A549 (cell line): ENCODE measurements at regions of chr12 and their contacts with region 1.

Region 1: DNA sequence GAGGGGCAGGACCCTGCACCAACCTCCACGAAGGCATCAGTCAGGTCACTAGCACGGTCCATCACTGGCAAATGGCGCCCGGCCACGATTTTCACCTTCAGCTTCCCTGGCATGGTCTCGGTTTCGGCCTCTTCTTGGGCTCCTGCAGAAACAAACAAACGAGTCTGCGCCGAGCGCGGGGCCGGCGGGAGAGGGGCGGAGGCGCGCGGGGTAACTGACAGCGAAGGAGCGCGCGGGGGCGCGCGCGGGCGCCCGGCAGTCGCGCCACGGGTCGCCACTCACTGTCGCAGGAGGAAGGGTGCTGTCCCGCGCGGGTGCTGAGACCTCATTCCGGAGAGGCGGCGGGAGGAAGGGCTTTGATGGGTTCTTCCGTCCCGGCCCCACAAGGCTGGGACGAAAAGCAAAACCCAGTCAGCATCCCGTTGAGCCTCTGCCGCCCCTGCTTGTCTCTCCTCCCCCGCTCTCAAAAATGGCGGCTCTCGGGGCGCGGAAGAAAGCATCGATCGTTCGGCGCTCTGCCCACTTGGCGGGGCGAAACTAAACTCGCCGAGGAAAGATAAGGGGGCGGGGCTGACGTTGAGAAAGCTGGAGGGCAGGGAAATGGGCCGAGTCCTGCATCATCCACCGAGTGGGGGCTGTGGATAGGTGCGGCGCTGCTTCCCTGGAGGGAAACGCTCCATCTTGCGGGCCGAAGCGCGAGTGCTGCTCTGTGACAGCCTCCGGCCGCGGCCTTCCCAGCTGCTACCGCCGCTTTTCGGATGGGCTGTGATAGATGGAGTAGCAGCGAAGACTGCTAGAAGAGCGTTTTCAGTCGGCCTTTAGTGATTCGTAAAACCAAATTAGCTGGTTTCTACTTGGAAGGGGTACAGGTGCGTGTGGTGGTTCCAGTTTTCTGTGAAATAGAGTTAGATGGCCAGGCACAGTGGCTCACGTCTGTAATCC is at the start of gene C2CD5:
- DNase-seq: peak; percentile 84 to 99
- ATAC-seq: peak; percentile 96 to 97
- H3K4me3 ChIP-seq: peak within 1 kb of the TSS; percentile 83
- H3K27ac ChIP-seq: peak within 1 kb of the TSS; percentile 94 to 95
- H3K4me1 ChIP-seq: peaks cover 18% of the 10 kb centered on the region
- CTCF ChIP-seq: peak; percentile 38
- EP300 ChIP-seq: no peak
- POLR2A ChIP-seq: peak; percentile 82
- RAD21 ChIP-seq: peak; percentile 39
- polyA plus RNA-seq, gene C2CD5: 35.2 and 39.7 TPM in 2 replicates

Region 2: GRCh38 chr12:22532317-22532716 is 12.0 kb before region 1 on chr12:
- CTCF ChIA-PET with region 1: interaction called, 10 read pairs
- POLR2A ChIA-PET with region 1: interaction called, 5 read pairs
- DNase-seq: no peak
- ATAC-seq: no peak
- H3K4me3 ChIP-seq: no peak overlapping the region
- H3K27ac ChIP-seq: no peak overlapping the region
- H3K4me1 ChIP-seq: peaks cover 12% of the 10 kb centered on the region; the same call in 2 of the 3 replicates
- CTCF ChIP-seq: no peak
- EP300 ChIP-seq: no peak
- POLR2A ChIP-seq: no peak
- RAD21 ChIP-seq: no peak

Region 3: GRCh38 chr12:22624870-22625761 is 80.8 kb after region 1 on chr12 and contains the start of gene ETNK1:
- CTCF ChIA-PET with region 1: interaction called, 8 read pairs
- POLR2A ChIA-PET with region 1: interaction called, 33 read pairs
- DNase-seq: peak; percentile 80 to 95
- ATAC-seq: peak; percentile 95 to 99
- H3K4me3 ChIP-seq: peak within 1 kb of the TSS; percentile 70
- H3K27ac ChIP-seq: peak within 1 kb of the TSS; percentile 91 to 99
- H3K4me1 ChIP-seq: peaks cover 21% of the 10 kb centered on the region; the same call in 2 of the 3 replicates
- CTCF ChIP-seq: 0 out of 3 replicates have a peak, but pooled peaks have one; percentile 8
- EP300 ChIP-seq: no peak
- POLR2A ChIP-seq: peak; percentile 89
- RAD21 ChIP-seq: peak in 1 of 2 experiments; percentile 14; a peak in 1 of 5 replicates
- polyA plus RNA-seq, gene ETNK1: 52.7 and 58.8 TPM in 2 replicates